Sigmoid colon (tissue), 7 donors: ENCODE measurements at regions of chr4 and their contacts with region 1.

Region 1: GRCh38 chr4:141133146-141133998 is at the start of gene RNF150:
- DNase-seq: peak; percentile 90
- H3K4me3 ChIP-seq: peak within 1 kb of the TSS; percentile 59 to 96 (median 86)
- H3K27ac ChIP-seq: peak within 1 kb of the TSS; percentile 87 to 97 (median 92)
- H3K4me1 ChIP-seq: peaks cover 0 to 32% (median 17%) of the 10 kb centered on the region in 4 donors
- H3K27me3 ChIP-seq: no peaks in the 10 kb centered on the region
- CTCF ChIP-seq: peak; percentile 74 to 82 (median 76)
- EP300 ChIP-seq: no peak
- POLR2A ChIP-seq: no peak
- total RNA-seq, gene RNF150: 53.2 to 69.0 (median 64.2) TPM

Region 2: GRCh38 chr4:140373328-140374129 is 759.8 kb before region 1 on chr4 and contains the start of gene SCOC:
- intact Hi-C with region 1: loop called (anchors 5 kb)
- DNase-seq: peak; percentile 100
- H3K4me3 ChIP-seq: peak within 1 kb of the TSS; percentile 72 to 93 (median 84)
- H3K27ac ChIP-seq: peak within 1 kb of the TSS; percentile 93 to 97 (median 96)
- H3K4me1 ChIP-seq: peaks cover 0 to 48% (median 28%) of the 10 kb centered on the region in 4 donors
- H3K27me3 ChIP-seq: no peaks in the 10 kb centered on the region
- CTCF ChIP-seq: no peak
- EP300 ChIP-seq: no peak
- POLR2A ChIP-seq: peak; percentile 44 to 67
- total RNA-seq, gene SCOC: 55.9 to 74.2 (median 65.5) TPM

Region 3: DNA sequence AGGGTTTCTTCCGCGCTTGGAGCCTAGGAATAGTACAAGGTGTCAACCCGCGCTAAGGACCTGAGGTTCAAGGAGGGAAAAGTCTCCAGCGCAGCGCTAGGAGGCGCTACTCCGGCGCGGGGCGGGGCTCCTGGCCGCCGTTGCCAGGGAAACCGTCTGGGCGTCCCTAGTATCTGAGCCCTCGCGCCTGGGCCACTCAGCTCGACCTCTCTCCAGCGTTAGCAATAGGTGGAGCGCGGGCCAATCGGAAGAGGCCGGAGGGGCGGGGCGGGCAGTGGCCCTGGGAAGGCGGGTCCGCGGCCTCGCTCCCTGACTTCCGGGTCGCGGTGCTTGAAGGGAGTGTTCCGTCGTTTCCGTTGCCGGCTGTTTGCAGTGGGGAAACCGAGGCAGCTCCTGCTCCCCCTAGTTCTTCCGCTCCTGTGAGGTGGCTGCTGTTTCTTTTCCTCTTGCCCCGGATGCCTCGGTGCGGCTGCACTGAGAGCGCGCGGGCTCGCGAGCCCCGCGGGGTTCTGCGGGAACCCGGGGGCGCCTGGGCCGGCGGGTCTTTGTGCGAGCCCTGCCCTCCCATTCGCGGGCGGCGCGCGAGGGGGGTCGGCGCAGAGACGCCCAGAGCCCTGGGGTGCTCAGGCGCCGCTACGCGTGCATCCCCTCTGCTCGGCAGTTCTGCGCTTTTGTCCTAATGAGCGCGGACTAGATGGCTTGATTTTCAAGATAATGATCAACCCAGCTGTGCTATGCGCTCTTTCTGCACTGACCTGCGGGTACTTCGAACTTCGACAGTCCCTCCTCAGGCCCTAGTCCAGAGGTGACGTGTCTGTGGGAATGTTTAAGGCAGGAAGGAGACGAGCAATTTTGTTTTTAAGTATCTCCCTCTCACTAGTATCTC is 609.3 kb before region 1 on chr4 and contains the start of gene ELMOD2:
- intact Hi-C with region 1: loop called (anchors 5 kb)
- DNase-seq: peak; percentile 99
- H3K4me3 ChIP-seq: peak within 1 kb of the TSS; percentile 84 to 95 (median 89)
- H3K27ac ChIP-seq: peak within 1 kb of the TSS; percentile 88 to 92 (median 90)
- H3K4me1 ChIP-seq: peaks cover 0 to 16% (median 13%) of the 10 kb centered on the region in 4 donors
- H3K27me3 ChIP-seq: no peaks in the 10 kb centered on the region
- CTCF ChIP-seq: peak; percentile 73 to 82 (median 78)
- EP300 ChIP-seq: no peak
- POLR2A ChIP-seq: no peak
- total RNA-seq, gene ELMOD2: 11.8 to 20.7 (median 19.6) TPM

Region 4: GRCh38 chr4:140861359-140862176 is 271.8 kb before region 1 on chr4:
- intact Hi-C with region 1: loop called (anchors 1 kb)
- DNase-seq: peak; percentile 86
- H3K4me3 ChIP-seq: no peak overlapping the region
- H3K27ac ChIP-seq: peak overlapping the region in 2 of 4 donors; percentile 51 to 62
- H3K4me1 ChIP-seq: peaks cover 0 to 30% (median 21%) of the 10 kb centered on the region in 4 donors
- H3K27me3 ChIP-seq: no peaks in the 10 kb centered on the region
- CTCF ChIP-seq: peak; percentile 70 to 79 (median 75)
- EP300 ChIP-seq: no peak
- POLR2A ChIP-seq: no peak

Region 5: DNA sequence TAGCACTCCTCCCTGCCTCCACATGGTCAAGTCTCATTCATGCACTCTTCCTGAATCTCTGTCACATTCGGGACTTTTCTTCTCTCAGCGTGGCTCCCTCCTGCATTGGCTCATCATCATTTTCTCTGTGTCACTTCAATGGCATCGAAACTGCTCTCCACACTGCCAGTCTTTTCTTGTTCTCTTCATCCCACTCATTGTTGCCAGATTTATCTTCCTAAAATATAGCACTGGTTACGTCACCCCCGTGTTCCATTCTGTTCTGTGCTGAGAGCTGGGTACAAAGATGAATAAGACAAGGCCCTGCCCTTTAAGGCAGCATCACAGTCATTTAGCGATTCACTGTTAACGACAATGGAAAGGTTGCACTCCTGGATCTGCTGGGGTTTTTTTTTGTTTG is 202.8 kb before region 1 on chr4:
- intact Hi-C with region 1: loop called (anchors 5 kb)
- DNase-seq: peak; percentile 71
- H3K4me3 ChIP-seq: no peak overlapping the region
- H3K27ac ChIP-seq: peak overlapping the region in 2 of 4 donors; percentile 5 to 57
- H3K4me1 ChIP-seq: peaks cover 0 to 70% (median 44%) of the 10 kb centered on the region in 4 donors
- H3K27me3 ChIP-seq: no peaks in the 10 kb centered on the region
- CTCF ChIP-seq: no peak
- EP300 ChIP-seq: peak in 1 of 4 donors; percentile 51
- POLR2A ChIP-seq: no peak

Region 6: GRCh38 chr4:140996766-140997165 is 136.6 kb before region 1 on chr4:
- intact Hi-C with region 1: loop called (anchors 5 kb)
- DNase-seq: no peak
- H3K4me3 ChIP-seq: no peak overlapping the region
- H3K27ac ChIP-seq: peak overlapping the region; percentile 59 to 77 (median 74)
- H3K4me1 ChIP-seq: peaks cover 0 to 79% (median 57%) of the 10 kb centered on the region in 4 donors
- H3K27me3 ChIP-seq: no peaks in the 10 kb centered on the region
- CTCF ChIP-seq: peak in 1 of 4 experiments; percentile 17
- EP300 ChIP-seq: no peak
- POLR2A ChIP-seq: no peak

Region 7: GRCh38 chr4:141028024-141028529 is 105.3 kb before region 1 on chr4:
- intact Hi-C with region 1: loop called (anchors 5 kb)
- DNase-seq: no peak
- H3K4me3 ChIP-seq: no peak overlapping the region
- H3K27ac ChIP-seq: peak overlapping the region; percentile 43 to 79 (median 76)
- H3K4me1 ChIP-seq: peaks cover 0 to 39% (median 33%) of the 10 kb centered on the region in 4 donors
- H3K27me3 ChIP-seq: no peaks in the 10 kb centered on the region
- CTCF ChIP-seq: no peak
- EP300 ChIP-seq: peak; percentile 7 to 45 (median 32)
- POLR2A ChIP-seq: no peak